Activated CD8-positive, alpha-beta T cell treated with anti-CD3 and anti-CD28 coated beads, Interleukin-2, amount 10 ng/mL, durations not matched to agents 7 days and 5 days (primary cell): ENCODE measurements at regions of chr6 and their contacts with region 1.

Region 1: DNA sequence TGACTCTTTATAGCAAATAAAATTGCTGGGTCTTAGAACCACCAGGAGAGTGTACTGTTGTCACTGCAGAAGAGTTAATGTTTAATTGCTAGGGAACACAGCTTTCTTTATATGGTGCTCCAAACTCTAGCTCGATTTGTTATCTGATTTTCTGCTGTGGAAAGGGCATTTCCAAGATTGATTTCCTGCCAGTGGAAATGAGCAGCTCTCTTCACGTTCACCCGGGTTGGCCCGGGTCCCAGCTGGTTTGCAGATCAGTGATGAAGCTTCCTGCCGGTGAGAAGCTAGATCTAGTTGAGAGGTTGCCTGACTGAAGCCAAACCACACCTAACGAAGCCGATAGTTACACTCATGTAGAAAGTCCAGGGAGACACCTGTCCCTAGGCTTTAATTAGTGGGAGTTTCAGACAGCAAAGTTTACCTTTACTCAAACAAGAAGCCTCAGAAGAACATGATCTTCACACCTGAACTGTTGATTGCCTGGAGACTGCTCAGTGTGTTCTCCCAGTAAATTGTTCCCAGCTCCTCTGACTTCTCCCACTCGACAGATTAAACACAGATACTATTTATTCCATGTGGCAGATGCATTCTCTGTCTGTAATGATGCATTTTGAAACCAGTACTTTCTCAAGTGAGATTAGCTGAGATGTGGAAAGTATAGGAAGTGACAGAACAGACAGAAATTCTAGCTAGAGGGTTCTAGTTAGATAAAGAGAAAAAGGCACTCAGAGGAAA is 27.8 kb downstream of the PAQR8 start:
- DNase-seq: peak; percentile 72
- ATAC-seq: peak; percentile 57
- H3K4me3 Mint-ChIP-seq: peak overlapping the region; percentile 73
- H3K27ac Mint-ChIP-seq: peak overlapping the region; percentile 96
- H3K4me1 Mint-ChIP-seq: peaks cover 75% of the 10 kb centered on the region
- H3K27me3 Mint-ChIP-seq: no peaks in the 10 kb centered on the region

Region 2: DNA sequence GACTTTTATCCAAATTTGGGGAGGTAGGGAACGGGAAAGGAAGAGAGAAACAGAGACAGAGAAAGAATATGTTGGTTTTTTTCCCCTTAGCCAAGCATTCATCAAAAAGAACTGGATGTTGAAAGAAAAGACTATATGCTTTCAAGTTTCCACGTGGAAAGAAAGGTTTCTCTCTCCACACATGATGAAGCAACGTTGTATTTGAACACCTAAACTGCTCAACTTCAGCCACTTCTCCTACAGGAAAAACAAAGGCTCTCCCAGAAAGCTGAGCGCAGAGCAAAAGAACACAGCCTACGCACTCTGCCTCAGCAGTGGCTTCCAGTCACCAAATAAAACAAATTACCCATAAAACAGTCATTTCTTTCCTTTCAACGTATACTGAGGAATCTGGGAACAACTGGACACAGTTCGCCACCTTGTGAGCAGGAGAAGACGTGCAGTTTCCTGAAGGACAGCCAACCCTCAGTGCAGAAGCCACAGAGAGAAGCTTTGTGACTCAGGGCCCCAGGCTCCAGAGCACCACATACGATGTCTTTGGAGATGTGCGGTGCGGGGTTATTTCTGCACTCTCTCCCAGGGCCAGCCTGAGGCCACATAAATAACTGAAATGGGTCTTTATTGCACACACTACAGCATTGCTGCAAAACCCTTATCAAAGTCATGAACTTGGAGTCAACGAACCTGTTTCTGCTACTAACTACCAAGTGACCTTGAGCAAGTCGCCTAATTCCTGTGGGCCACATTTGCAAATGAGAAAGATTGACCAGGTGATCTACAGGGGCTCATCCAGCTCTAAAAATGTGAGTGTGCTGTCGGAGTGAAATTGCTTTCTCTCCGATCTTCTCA is 155.6 kb before region 1 on chr6:
- CTCF ChIA-PET with region 1: no interaction called
- POLR2A ChIA-PET with region 1: no interaction called
- DNase-seq: peak; percentile 27
- ATAC-seq: no peak
- H3K4me3 Mint-ChIP-seq: no peak overlapping the region
- H3K27ac Mint-ChIP-seq: no peak overlapping the region
- H3K4me1 Mint-ChIP-seq: peaks cover 12% of the 10 kb centered on the region
- H3K27me3 Mint-ChIP-seq: peaks cover 68% of the 10 kb centered on the region

Region 3: GRCh38 chr6:52304983-52305390 is 84.8 kb before region 1 on chr6:
- CTCF ChIA-PET with region 1: interaction called, 24 read pairs
- POLR2A ChIA-PET with region 1: interaction called, 7 read pairs
- DNase-seq: no peak
- ATAC-seq: peak; percentile 37
- H3K4me3 Mint-ChIP-seq: peak overlapping the region; percentile 59
- H3K27ac Mint-ChIP-seq: peak overlapping the region; percentile 83
- H3K4me1 Mint-ChIP-seq: peaks cover 62% of the 10 kb centered on the region
- H3K27me3 Mint-ChIP-seq: no peaks in the 10 kb centered on the region

Region 4: GRCh38 chr6:52361945-52362442 is 27.8 kb before region 1 on chr6 and contains the start of gene PAQR8:
- CTCF ChIA-PET with region 1: interaction called, 97 read pairs
- POLR2A ChIA-PET with region 1: interaction called, 58 read pairs
- DNase-seq: peak; percentile 82
- ATAC-seq: peak; percentile 93
- H3K4me3 Mint-ChIP-seq: peak within 1 kb of the TSS; percentile 98
- H3K27ac Mint-ChIP-seq: peak within 1 kb of the TSS; percentile 92
- H3K4me1 Mint-ChIP-seq: peaks cover 34% of the 10 kb centered on the region
- H3K27me3 Mint-ChIP-seq: no peaks in the 10 kb centered on the region
- total RNA-seq, gene PAQR8: 23.0 to 25.7 TPM

Region 5: GRCh38 chr6:52371656-52372191 is 18.1 kb before region 1 on chr6:
- CTCF ChIA-PET with region 1: interaction called, 97 read pairs
- POLR2A ChIA-PET with region 1: interaction called, 8 read pairs
- DNase-seq: no peak
- ATAC-seq: no peak
- H3K4me3 Mint-ChIP-seq: no peak overlapping the region
- H3K27ac Mint-ChIP-seq: no peak overlapping the region
- H3K4me1 Mint-ChIP-seq: peaks cover 23% of the 10 kb centered on the region
- H3K27me3 Mint-ChIP-seq: no peaks in the 10 kb centered on the region

Region 6: GRCh38 chr6:52377538-52378221 is 12.1 kb before region 1 on chr6:
- CTCF ChIA-PET with region 1: interaction called, 81 read pairs
- POLR2A ChIA-PET with region 1: interaction called, 10 read pairs
- DNase-seq: no peak
- ATAC-seq: peak; percentile 39
- H3K4me3 Mint-ChIP-seq: peak overlapping the region; percentile 30
- H3K27ac Mint-ChIP-seq: peak overlapping the region; percentile 63
- H3K4me1 Mint-ChIP-seq: peaks cover 53% of the 10 kb centered on the region
- H3K27me3 Mint-ChIP-seq: no peaks in the 10 kb centered on the region

Region 7: DNA sequence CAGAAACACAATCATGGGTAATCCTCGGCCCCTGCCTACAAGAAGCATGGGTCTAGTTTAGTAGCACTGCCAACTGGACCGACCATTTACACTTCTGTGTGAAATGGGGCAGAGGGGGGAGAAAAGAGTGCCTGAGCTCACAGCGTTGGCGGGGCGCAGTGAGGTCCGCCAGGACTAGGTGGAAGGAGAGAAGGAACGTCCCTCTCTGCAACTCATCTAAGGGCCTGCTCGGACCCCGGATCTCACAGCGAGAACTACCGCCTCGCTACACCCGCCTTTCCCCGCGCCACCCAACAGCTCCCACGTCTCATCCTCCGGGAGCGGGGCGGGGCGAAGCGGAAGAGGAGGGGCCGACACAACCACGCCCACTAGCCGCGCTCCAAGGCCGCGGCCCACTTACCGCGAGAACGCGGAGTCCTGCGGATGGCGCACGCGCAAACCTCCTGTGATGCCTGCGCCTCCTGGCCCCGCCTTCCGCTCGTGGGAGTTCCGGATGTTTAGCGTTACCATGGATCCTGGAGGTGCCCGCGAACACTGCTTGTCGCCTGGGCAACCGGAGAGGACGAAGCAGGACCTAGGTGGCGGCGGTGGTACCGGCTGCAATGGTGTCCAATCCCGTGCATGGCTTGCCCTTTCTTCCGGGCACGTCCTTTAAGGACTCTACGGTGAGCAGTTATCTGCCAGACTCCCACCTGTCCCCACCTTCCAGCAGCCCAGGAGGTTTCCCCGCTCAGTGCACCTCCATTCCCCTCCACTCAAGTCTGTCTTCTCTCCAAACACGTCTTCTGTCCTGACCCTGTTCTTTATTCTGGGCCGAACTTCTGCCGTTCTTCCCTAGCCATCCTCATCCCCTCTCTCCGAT is 30.2 kb after region 1 on chr6 and contains the start of gene EFHC1:
- CTCF ChIA-PET with region 1: interaction called, 21 read pairs
- POLR2A ChIA-PET with region 1: interaction called, 3 read pairs
- DNase-seq: peak; percentile 99
- ATAC-seq: peak; percentile 93
- H3K4me3 Mint-ChIP-seq: no peak within 1 kb of the TSS
- H3K27ac Mint-ChIP-seq: peak within 1 kb of the TSS; percentile 75
- H3K4me1 Mint-ChIP-seq: peaks cover 27% of the 10 kb centered on the region
- H3K27me3 Mint-ChIP-seq: no peaks in the 10 kb centered on the region
- total RNA-seq, gene EFHC1: 1.4 to 2.5 TPM